Ovary (tissue), 10 donors: ENCODE measurements at regions of chr10 and their contacts with region 1.

Region 1: GRCh38 chr10:71850637-71851464 is at the start of gene PSAP:
- DNase-seq: peak; percentile 98 to 99 (median 99)
- H3K4me3 ChIP-seq: peak within 1 kb of the TSS; percentile 94
- H3K27ac ChIP-seq: peak within 1 kb of the TSS; percentile 74 to 93
- H3K4me1 ChIP-seq: peaks cover 12% of the 10 kb centered on the region
- H3K27me3 ChIP-seq: no peaks in the 10 kb centered on the region
- CTCF ChIP-seq: no peak
- EP300 ChIP-seq: no peak
- POLR2A ChIP-seq: peak; percentile 95
- total RNA-seq, gene PSAP: 632 to 1,246 (median 1,118) TPM

Region 2: GRCh38 chr10:71684356-71685173 is 166.3 kb before region 1 on chr10:
- intact Hi-C with region 1: no loop called
- DNase-seq: no peak
- H3K4me3 ChIP-seq: no peak overlapping the region
- H3K27ac ChIP-seq: no peak overlapping the region
- H3K4me1 ChIP-seq: no peaks in the 10 kb centered on the region
- H3K27me3 ChIP-seq: no peaks in the 10 kb centered on the region
- CTCF ChIP-seq: no peak
- EP300 ChIP-seq: no peak
- POLR2A ChIP-seq: no peak

Region 3: GRCh38 chr10:71888623-71889387 is 38.0 kb after region 1 on chr10:
- intact Hi-C with region 1: loop called in 1 of 4 experiments (anchors 2 kb)
- DNase-seq: peak; percentile 88 to 95 (median 91)
- H3K4me3 ChIP-seq: peak overlapping the region; percentile 51
- H3K27ac ChIP-seq: peak overlapping the region; percentile 79 to 92
- H3K4me1 ChIP-seq: peaks cover 11% of the 10 kb centered on the region
- H3K27me3 ChIP-seq: no peaks in the 10 kb centered on the region
- CTCF ChIP-seq: peak in 1 of 3 donors; percentile 18
- EP300 ChIP-seq: peak; percentile 66
- POLR2A ChIP-seq: peak; percentile 87